GM12878 (cell line): ENCODE measurements at regions of chr7 and their contacts with region 1.

Region 1: GRCh38 chr7:129367700-129368388 is 66.4 kb upstream of the STRIP2 start:
- DNase-seq: peak; percentile 57
- ATAC-seq: peak; percentile 85
- H3K4me3 ChIP-seq: peak overlapping the region; percentile 45
- H3K27ac ChIP-seq: peak overlapping the region; percentile 92
- H3K4me1 ChIP-seq: peaks cover 10% of the 10 kb centered on the region; the same call in 1 of the 2 replicates
- H3K27me3 ChIP-seq: no peaks in the 10 kb centered on the region
- CTCF ChIP-seq: peak; percentile 88 to 93 (median 88)
- EP300 ChIP-seq: 0 out of 4 replicates have a peak, but pooled peaks of 1 of the 2 experiments have one; percentile 28
- POLR2A ChIP-seq: peak; percentile 44; the same call in 1 of the 2 replicates
- RAD21 ChIP-seq: peak; percentile 85

Region 2: GRCh38 chr7:129298268-129298893 is 69.5 kb before region 1 on chr7:
- CTCF ChIA-PET with region 1: interaction called, 10 read pairs
- POLR2A ChIA-PET with region 1: no interaction called
- RAD21 ChIA-PET with region 1: interaction called, 3 read pairs
- SMC1A ChIA-PET with region 1: interaction called, 11 read pairs
- in situ Hi-C with region 1: no loop called
- intact Hi-C with region 1: no loop called
- DNase-seq: no peak
- ATAC-seq: peak; percentile 48; the same call in 2 of the 3 replicates
- H3K4me3 ChIP-seq: no peak overlapping the region
- H3K27ac ChIP-seq: no peak overlapping the region
- H3K4me1 ChIP-seq: no peaks in the 10 kb centered on the region
- H3K27me3 ChIP-seq: no peaks in the 10 kb centered on the region
- CTCF ChIP-seq: peak; percentile 71 to 76 (median 76)
- EP300 ChIP-seq: no peak
- POLR2A ChIP-seq: no peak
- RAD21 ChIP-seq: peak; percentile 78

Region 3: GRCh38 chr7:129389829-129390228 is 22.0 kb after region 1 on chr7:
- CTCF ChIA-PET with region 1: interaction called, 20 read pairs
- POLR2A ChIA-PET with region 1: interaction called, 3 read pairs
- RAD21 ChIA-PET with region 1: interaction called, 22 read pairs
- SMC1A ChIA-PET with region 1: interaction called, 65 read pairs
- in situ Hi-C with region 1: no loop called
- intact Hi-C with region 1: no loop called
- DNase-seq: no peak
- ATAC-seq: no peak
- H3K4me3 ChIP-seq: no peak overlapping the region
- H3K27ac ChIP-seq: no peak overlapping the region
- H3K4me1 ChIP-seq: no peaks in the 10 kb centered on the region; the same call in 1 of the 2 replicates
- H3K27me3 ChIP-seq: no peaks in the 10 kb centered on the region
- CTCF ChIP-seq: no peak
- EP300 ChIP-seq: no peak
- POLR2A ChIP-seq: no peak
- RAD21 ChIP-seq: no peak

Region 4: DNA sequence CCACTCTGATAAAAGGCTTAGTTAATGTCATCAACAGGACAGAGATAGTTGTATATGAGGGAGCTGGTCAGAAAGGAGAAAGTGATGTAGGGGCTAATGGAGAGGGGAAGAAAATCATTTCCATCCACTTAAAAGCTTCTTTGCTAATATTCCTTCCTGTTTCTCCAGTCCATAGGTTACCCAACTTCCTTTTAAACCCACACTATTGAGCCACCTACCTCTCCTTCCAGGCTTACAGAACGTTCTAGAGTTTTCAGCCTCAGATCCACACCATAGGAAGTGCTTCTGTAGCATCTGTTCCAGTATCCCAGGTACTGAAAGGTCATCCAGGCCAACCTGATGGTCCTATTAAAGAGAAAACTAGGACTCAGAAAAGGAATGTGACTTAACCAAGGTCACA is 94.6 kb after region 1 on chr7:
- CTCF ChIA-PET with region 1: interaction called, 108 read pairs
- POLR2A ChIA-PET with region 1: interaction called, 14 read pairs
- RAD21 ChIA-PET with region 1: interaction called, 6 read pairs
- SMC1A ChIA-PET with region 1: interaction called, 165 read pairs
- in situ Hi-C with region 1: loop called (anchors 5 kb)
- intact Hi-C with region 1: no loop called
- DNase-seq: no peak
- ATAC-seq: no peak
- H3K4me3 ChIP-seq: no peak overlapping the region
- H3K27ac ChIP-seq: no peak overlapping the region
- H3K4me1 ChIP-seq: no peaks in the 10 kb centered on the region
- H3K27me3 ChIP-seq: no peaks in the 10 kb centered on the region
- CTCF ChIP-seq: no peak
- EP300 ChIP-seq: no peak
- POLR2A ChIP-seq: no peak
- RAD21 ChIP-seq: no peak

Region 5: GRCh38 chr7:129635300-129636029 is 267.6 kb after region 1 on chr7:
- CTCF ChIA-PET with region 1: interaction called, 6 read pairs
- POLR2A ChIA-PET with region 1: interaction called, 3 read pairs
- RAD21 ChIA-PET with region 1: interaction called, 9 read pairs
- SMC1A ChIA-PET with region 1: interaction called, 11 read pairs
- in situ Hi-C with region 1: no loop called
- intact Hi-C with region 1: loop called (anchors 5 kb)
- DNase-seq: peak; percentile 47
- ATAC-seq: peak; percentile 100
- H3K4me3 ChIP-seq: no peak overlapping the region
- H3K27ac ChIP-seq: no peak overlapping the region
- H3K4me1 ChIP-seq: peaks cover 7% of the 10 kb centered on the region
- H3K27me3 ChIP-seq: no peaks in the 10 kb centered on the region
- CTCF ChIP-seq: peak; percentile 85 to 89 (median 89)
- EP300 ChIP-seq: no peak
- POLR2A ChIP-seq: no peak
- RAD21 ChIP-seq: peak; percentile 85

Region 6: DNA sequence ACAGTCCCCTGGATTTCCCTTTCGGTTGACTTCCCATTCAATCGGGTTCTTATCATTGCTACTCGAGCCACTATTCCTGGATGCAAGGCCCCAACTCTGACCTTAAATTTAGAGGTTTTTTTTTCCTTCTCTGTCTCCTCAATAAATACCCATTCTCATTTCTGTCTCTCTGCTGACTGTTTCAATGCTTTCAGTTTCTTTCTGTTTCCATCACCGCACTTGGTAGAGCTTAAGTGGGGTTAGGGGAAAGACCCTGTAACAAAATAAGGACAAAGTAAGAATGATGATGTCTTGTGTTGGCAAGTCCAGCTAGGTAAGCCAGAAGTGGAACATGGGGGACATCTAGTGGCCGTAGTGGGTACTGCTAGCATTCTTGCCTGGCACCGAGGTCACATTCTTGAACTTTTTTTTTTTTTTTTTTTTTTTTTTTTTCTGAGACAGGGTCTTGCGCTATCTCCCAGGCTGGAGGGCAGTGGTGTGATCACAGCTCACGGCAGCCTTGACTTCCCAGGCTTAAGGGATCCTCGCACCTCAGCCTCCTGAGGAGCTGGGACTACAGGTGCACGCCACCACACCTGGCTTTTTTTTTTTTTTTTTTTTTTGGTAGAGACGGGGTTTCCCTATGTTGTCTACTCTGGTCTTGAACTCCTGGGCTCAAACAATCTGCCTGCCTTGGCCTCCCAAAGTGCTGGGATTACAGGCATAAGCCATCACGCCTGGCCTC is 643.0 kb after region 1 on chr7:
- CTCF ChIA-PET with region 1: interaction called, 22 read pairs
- POLR2A ChIA-PET with region 1: no interaction called
- RAD21 ChIA-PET with region 1: interaction called, 11 read pairs
- SMC1A ChIA-PET with region 1: interaction called, 9 read pairs
- in situ Hi-C with region 1: loop called (anchors 10 kb)
- intact Hi-C with region 1: no loop called
- DNase-seq: peak; percentile 92
- ATAC-seq: peak; percentile 90
- H3K4me3 ChIP-seq: no peak overlapping the region
- H3K27ac ChIP-seq: peak overlapping the region; percentile 61
- H3K4me1 ChIP-seq: peaks cover 27% of the 10 kb centered on the region
- H3K27me3 ChIP-seq: no peaks in the 10 kb centered on the region
- CTCF ChIP-seq: peak; percentile 92 to 96 (median 94)
- EP300 ChIP-seq: no peak
- POLR2A ChIP-seq: no peak
- RAD21 ChIP-seq: peak; percentile 98

Region 7: GRCh38 chr7:130421684-130422083 is 1053.8 kb after region 1 on chr7:
- CTCF ChIA-PET with region 1: no interaction called
- POLR2A ChIA-PET with region 1: no interaction called
- RAD21 ChIA-PET with region 1: no interaction called
- SMC1A ChIA-PET with region 1: no interaction called
- in situ Hi-C with region 1: no loop called
- intact Hi-C with region 1: no loop called
- DNase-seq: no peak
- ATAC-seq: no peak; the same call in 2 of the 3 replicates
- H3K4me3 ChIP-seq: no peak overlapping the region
- H3K27ac ChIP-seq: no peak overlapping the region
- H3K4me1 ChIP-seq: no peaks in the 10 kb centered on the region
- H3K27me3 ChIP-seq: no peaks in the 10 kb centered on the region
- CTCF ChIP-seq: no peak
- EP300 ChIP-seq: no peak
- POLR2A ChIP-seq: no peak
- RAD21 ChIP-seq: no peak